GM12878 (cell line): ENCODE measurements at regions of chr14 and their contacts with region 1.

Region 1: GRCh38 chr14:75794615-75795038 is 133.6 kb downstream of the TTLL5 start:
- DNase-seq: no peak
- ATAC-seq: peak; percentile 40; the same call in 2 of the 3 replicates
- H3K4me3 ChIP-seq: no peak overlapping the region
- H3K27ac ChIP-seq: no peak overlapping the region
- H3K4me1 ChIP-seq: no peaks in the 10 kb centered on the region
- H3K27me3 ChIP-seq: no peaks in the 10 kb centered on the region
- CTCF ChIP-seq: peak in 2 of 3 experiments; percentile 17 to 37; a peak in 2 of 6 replicates
- EP300 ChIP-seq: no peak
- POLR2A ChIP-seq: no peak
- RAD21 ChIP-seq: no peak

Region 2: DNA sequence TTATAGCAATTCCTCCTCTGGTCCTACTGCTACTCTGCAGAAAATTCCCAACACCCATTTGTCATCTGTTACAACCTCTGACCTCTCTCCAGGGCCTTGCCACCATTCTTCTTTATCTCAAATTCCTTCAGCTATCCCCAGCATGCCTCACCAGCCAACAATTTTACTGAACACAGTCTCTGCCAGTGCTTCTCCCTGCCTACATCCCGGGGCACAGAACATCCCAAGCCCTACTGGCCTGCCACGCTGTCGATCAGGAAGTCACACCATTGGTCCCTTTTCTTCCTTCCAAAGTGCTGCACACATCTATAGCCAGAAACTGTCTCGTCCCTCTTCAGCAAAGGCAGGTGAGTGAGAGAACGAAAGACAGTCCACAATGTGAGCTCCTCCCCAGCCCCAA is 11.4 kb before region 1 on chr14:
- CTCF ChIA-PET with region 1: interaction called, 19 read pairs
- POLR2A ChIA-PET with region 1: no interaction called
- RAD21 ChIA-PET with region 1: no interaction called
- SMC1A ChIA-PET with region 1: interaction called, 7 read pairs
- in situ Hi-C with region 1: no loop called
- intact Hi-C with region 1: no loop called
- DNase-seq: no peak
- ATAC-seq: no peak
- H3K4me3 ChIP-seq: no peak overlapping the region
- H3K27ac ChIP-seq: no peak overlapping the region
- H3K4me1 ChIP-seq: no peaks in the 10 kb centered on the region
- H3K27me3 ChIP-seq: no peaks in the 10 kb centered on the region
- CTCF ChIP-seq: no peak
- EP300 ChIP-seq: no peak
- POLR2A ChIP-seq: no peak
- RAD21 ChIP-seq: no peak

Region 3: GRCh38 chr14:76546426-76547221 is 752.0 kb after region 1 on chr14:
- CTCF ChIA-PET with region 1: no interaction called
- POLR2A ChIA-PET with region 1: no interaction called
- RAD21 ChIA-PET with region 1: no interaction called
- SMC1A ChIA-PET with region 1: no interaction called
- in situ Hi-C with region 1: no loop called
- intact Hi-C with region 1: no loop called
- DNase-seq: no peak
- ATAC-seq: peak; percentile 69
- H3K4me3 ChIP-seq: no peak overlapping the region
- H3K27ac ChIP-seq: no peak overlapping the region
- H3K4me1 ChIP-seq: no peaks in the 10 kb centered on the region
- H3K27me3 ChIP-seq: no peaks in the 10 kb centered on the region; a peak in 2 of 4 replicates
- CTCF ChIP-seq: peak; percentile 45 to 62 (median 60); a peak in 5 of 6 replicates
- EP300 ChIP-seq: no peak
- POLR2A ChIP-seq: no peak
- RAD21 ChIP-seq: peak; percentile 36